ENCODE measurements at regions of chr15 and their contacts with region 1.

Region 1: DNA sequence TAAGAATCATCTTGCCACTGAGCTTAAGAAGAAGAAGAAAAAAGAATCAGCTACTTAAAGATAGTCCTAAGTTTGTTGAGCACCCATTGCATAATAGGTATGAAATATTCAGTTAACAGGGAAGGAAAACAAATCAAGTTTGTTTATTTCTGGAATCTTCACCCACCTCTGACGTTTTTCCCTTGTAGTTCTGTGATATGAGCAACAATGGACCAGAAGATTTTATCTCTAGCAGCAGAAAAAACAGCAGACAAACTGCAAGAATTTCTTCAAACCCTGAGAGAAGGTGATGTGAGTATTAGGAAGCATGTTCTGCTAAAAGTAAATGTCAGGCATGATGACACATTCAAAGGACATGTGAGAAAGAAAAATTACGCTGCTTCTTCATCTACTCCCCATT is 3.7 kb downstream of the FANCI start:
- DNase-seq: no peak
- H3K4me3 ChIP-seq: no peak overlapping the region
- H3K27ac ChIP-seq: no peak overlapping the region
- H3K4me1 ChIP-seq: peaks cover 18% of the 10 kb centered on the region
- H3K27me3 ChIP-seq: no peaks in the 10 kb centered on the region
- CTCF ChIP-seq: no peak
- POLR2A ChIP-seq: no peak

Region 2: DNA sequence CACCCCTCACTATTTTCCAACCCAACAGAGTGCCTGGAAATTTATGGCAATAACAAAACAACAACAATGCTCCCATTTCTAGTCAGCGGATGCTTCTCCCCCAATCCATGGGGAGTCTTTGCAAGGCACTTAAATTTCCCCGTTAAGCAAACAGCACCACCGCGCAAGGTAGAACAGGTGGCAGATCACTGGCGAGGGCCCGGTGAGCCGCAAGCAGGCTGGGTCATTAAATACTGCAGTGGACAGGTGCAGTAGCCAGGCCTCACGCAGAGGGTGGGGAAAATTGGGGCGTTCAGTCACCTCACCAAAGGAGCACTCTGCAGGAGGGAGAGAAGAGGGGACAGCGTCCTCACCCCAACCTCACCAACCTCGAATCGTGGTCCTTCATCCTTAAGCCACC is 1138.5 kb before region 1 on chr15:
- intact Hi-C with region 1: loop called (anchors 5 kb)
- DNase-seq: no peak
- H3K4me3 ChIP-seq: no peak overlapping the region
- H3K27ac ChIP-seq: no peak overlapping the region
- H3K4me1 ChIP-seq: no peaks in the 10 kb centered on the region
- H3K27me3 ChIP-seq: no peaks in the 10 kb centered on the region
- CTCF ChIP-seq: no peak
- POLR2A ChIP-seq: no peak

Region 3: DNA sequence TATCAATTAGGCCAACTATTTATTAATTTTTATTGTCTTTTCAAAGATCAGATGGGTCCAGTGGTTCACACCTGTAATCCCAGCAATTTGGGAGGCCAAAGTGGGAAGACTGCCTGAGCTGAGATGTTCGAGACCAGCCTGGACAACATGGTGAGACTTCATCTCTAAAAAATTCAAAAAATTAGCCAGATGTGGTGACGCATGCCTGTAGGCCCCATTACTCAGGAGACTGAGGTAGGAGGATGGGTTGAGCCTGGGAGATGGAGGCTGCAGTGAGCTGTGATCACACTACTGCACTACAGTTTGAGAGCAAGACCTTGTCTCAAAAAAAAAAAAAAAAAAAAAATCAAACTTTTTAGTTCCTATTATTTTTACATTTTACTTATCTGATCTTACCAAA is 638.2 kb after region 1 on chr15:
- intact Hi-C with region 1: no loop called
- DNase-seq: no peak
- H3K4me3 ChIP-seq: no peak overlapping the region
- H3K27ac ChIP-seq: no peak overlapping the region
- H3K4me1 ChIP-seq: peaks cover 3% of the 10 kb centered on the region
- H3K27me3 ChIP-seq: no peaks in the 10 kb centered on the region
- CTCF ChIP-seq: no peak
- POLR2A ChIP-seq: no peak

Measured in vagina (tissue), 2 donors.